Colonic mucosa (tissue), 4 donors: ENCODE measurements at regions of chr7 and their contacts with region 1.

Region 1: GRCh38 chr7:99504603-99505323 is at the start of gene ZKSCAN5:
- DNase-seq: peak; percentile 99
- H3K4me3 ChIP-seq: peak within 1 kb of the TSS; percentile 81
- H3K27ac ChIP-seq: peak within 1 kb of the TSS; percentile 83
- H3K4me1 ChIP-seq: peaks cover 13% of the 10 kb centered on the region
- H3K27me3 ChIP-seq: no peaks in the 10 kb centered on the region
- CTCF ChIP-seq: no peak
- total RNA-seq, gene ZKSCAN5: 5.6 to 6.6 TPM

Region 2: GRCh38 chr7:99551767-99552463 is 47.2 kb after region 1 on chr7 and contains the start of gene FAM200A:
- intact Hi-C with region 1: loop called (anchors 10 kb)
- DNase-seq: peak; percentile 92
- H3K4me3 ChIP-seq: peak within 1 kb of the TSS; percentile 77
- H3K27ac ChIP-seq: peak within 1 kb of the TSS; percentile 62
- H3K4me1 ChIP-seq: no peaks in the 10 kb centered on the region
- H3K27me3 ChIP-seq: no peaks in the 10 kb centered on the region
- CTCF ChIP-seq: no peak
- total RNA-seq, gene FAM200A: 4.1 to 5.0 TPM